Body of pancreas (tissue), 4 donors: ENCODE measurements at regions of chr4 and their contacts with region 1.

Region 1: GRCh38 chr4:85084380-85085094 is 118.0 kb upstream of the WDFY3 start:
- DNase-seq: peak; percentile 26 to 63 (median 44)
- ATAC-seq: peak; percentile 52
- H3K4me3 ChIP-seq: no peak overlapping the region
- H3K27ac ChIP-seq: no peak overlapping the region
- H3K4me1 ChIP-seq: no peaks in the 10 kb centered on the region
- H3K27me3 ChIP-seq: no peaks in the 10 kb centered on the region
- CTCF ChIP-seq: peak; percentile 7 to 79 (median 74)
- POLR2A ChIP-seq: no peak

Region 2: GRCh38 chr4:84750253-84750959 is 334.1 kb before region 1 on chr4:
- intact Hi-C with region 1: no loop called
- DNase-seq: peak in 1 of 4 donors; percentile 16
- ATAC-seq: peak; percentile 56
- H3K4me3 ChIP-seq: no peak overlapping the region
- H3K27ac ChIP-seq: no peak overlapping the region
- H3K4me1 ChIP-seq: no peaks in the 10 kb centered on the region
- H3K27me3 ChIP-seq: no peaks in the 10 kb centered on the region
- CTCF ChIP-seq: peak; percentile 44 to 63 (median 57)
- POLR2A ChIP-seq: no peak

Region 3: GRCh38 chr4:85369701-85370380 is 285.3 kb after region 1 on chr4:
- intact Hi-C with region 1: loop called (anchors 10 kb)
- DNase-seq: no peak
- ATAC-seq: no peak
- H3K4me3 ChIP-seq: no peak overlapping the region
- H3K27ac ChIP-seq: no peak overlapping the region
- H3K4me1 ChIP-seq: peaks cover 34% of the 10 kb centered on the region
- H3K27me3 ChIP-seq: no peaks in the 10 kb centered on the region
- CTCF ChIP-seq: no peak
- POLR2A ChIP-seq: no peak

Region 4: GRCh38 chr4:85448869-85449626 is 364.5 kb after region 1 on chr4:
- intact Hi-C with region 1: no loop called
- DNase-seq: no peak
- ATAC-seq: no peak
- H3K4me3 ChIP-seq: no peak overlapping the region
- H3K27ac ChIP-seq: no peak overlapping the region
- H3K4me1 ChIP-seq: no peaks in the 10 kb centered on the region
- H3K27me3 ChIP-seq: no peaks in the 10 kb centered on the region
- CTCF ChIP-seq: no peak
- POLR2A ChIP-seq: no peak